ENCODE measurements at regions of chr11 and their contacts with region 1.

Region 1: DNA sequence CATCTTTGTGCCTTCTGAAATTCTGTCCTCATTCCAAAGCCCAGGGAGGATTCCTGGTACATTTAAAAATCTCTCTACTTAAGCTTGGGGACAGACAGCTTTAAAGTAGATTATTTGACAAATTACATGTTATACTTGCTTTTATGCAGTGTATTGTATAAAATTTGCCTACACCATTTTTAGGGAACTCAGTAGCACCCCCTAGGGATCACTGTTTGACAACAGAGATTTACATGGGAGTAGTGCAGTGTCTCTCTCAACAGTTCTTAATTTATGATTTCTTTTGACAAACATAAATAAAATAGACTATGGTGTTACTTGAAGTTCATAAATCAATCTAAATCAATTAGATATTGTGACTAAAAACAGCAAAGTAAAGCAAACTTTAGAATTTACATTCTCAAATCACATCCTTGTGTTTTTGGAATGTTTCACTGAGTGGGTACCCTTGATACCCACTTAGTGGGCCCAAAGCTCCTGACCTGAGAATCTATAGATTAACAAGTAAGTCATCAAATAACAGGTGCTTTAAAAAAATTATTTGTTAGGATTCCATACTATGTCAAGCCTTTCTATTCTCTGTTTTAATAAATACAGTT is 428.8 kb downstream of the DYNC2H1 start:
- DNase-seq: peak; percentile 54
- H3K4me3 ChIP-seq: no peak overlapping the region
- H3K27ac ChIP-seq: no peak overlapping the region
- H3K4me1 ChIP-seq: peaks cover 4% of the 10 kb centered on the region
- H3K27me3 ChIP-seq: no peaks in the 10 kb centered on the region
- CTCF ChIP-seq: peak; percentile 45 to 46
- POLR2A ChIP-seq: no peak

Region 2: GRCh38 chr11:102810945-102811660 is 726.9 kb before region 1 on chr11:
- CTCF ChIA-PET with region 1: no interaction called
- POLR2A ChIA-PET with region 1: no interaction called
- dilution Hi-C with region 1: no loop called
- intact Hi-C with region 1: loop called (anchors 10 kb)
- DNase-seq: peak; percentile 34
- H3K4me3 ChIP-seq: no peak overlapping the region
- H3K27ac ChIP-seq: no peak overlapping the region
- H3K4me1 ChIP-seq: no peaks in the 10 kb centered on the region
- H3K27me3 ChIP-seq: peaks cover 10 to 13% of the 10 kb centered on the region in 2 experiments
- CTCF ChIP-seq: peak; percentile 28 to 43
- POLR2A ChIP-seq: no peak

Region 3: GRCh38 chr11:103202048-103202651 is 335.9 kb before region 1 on chr11:
- CTCF ChIA-PET with region 1: interaction called, 5 read pairs
- POLR2A ChIA-PET with region 1: no interaction called
- dilution Hi-C with region 1: no loop called
- intact Hi-C with region 1: loop called (anchors 5 kb)
- DNase-seq: peak; percentile 56
- H3K4me3 ChIP-seq: no peak overlapping the region
- H3K27ac ChIP-seq: no peak overlapping the region
- H3K4me1 ChIP-seq: no peaks in the 10 kb centered on the region
- H3K27me3 ChIP-seq: no peaks in the 10 kb centered on the region
- CTCF ChIP-seq: peak; percentile 42 to 50
- POLR2A ChIP-seq: no peak

Region 4: DNA sequence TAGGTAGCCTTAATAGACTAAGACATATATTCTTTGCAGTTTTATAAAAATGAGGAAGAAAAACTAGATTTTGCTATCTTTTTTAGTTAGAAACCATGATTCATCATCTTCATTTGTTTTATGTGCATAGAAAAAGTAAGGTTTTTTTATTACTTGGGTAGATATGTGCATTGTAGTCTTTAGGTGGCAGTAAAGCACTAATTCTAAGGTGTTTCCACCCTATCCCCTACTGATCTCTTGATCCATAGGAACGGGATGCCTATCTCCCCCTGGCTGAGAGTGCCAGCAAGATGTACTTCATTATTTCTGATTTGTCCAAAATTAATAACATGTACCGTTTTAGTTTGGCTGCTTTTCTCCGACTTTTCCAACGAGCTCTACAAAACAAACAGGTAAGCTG is 280.6 kb before region 1 on chr11:
- CTCF ChIA-PET with region 1: interaction called, 6 read pairs
- POLR2A ChIA-PET with region 1: no interaction called
- dilution Hi-C with region 1: no loop called
- intact Hi-C with region 1: loop called (anchors 1 kb)
- DNase-seq: peak; percentile 60
- H3K4me3 ChIP-seq: no peak overlapping the region
- H3K27ac ChIP-seq: no peak overlapping the region
- H3K4me1 ChIP-seq: no peaks in the 10 kb centered on the region
- H3K27me3 ChIP-seq: no peaks in the 10 kb centered on the region
- CTCF ChIP-seq: peak in 1 of 2 donors; percentile 32
- POLR2A ChIP-seq: no peak

Region 5: DNA sequence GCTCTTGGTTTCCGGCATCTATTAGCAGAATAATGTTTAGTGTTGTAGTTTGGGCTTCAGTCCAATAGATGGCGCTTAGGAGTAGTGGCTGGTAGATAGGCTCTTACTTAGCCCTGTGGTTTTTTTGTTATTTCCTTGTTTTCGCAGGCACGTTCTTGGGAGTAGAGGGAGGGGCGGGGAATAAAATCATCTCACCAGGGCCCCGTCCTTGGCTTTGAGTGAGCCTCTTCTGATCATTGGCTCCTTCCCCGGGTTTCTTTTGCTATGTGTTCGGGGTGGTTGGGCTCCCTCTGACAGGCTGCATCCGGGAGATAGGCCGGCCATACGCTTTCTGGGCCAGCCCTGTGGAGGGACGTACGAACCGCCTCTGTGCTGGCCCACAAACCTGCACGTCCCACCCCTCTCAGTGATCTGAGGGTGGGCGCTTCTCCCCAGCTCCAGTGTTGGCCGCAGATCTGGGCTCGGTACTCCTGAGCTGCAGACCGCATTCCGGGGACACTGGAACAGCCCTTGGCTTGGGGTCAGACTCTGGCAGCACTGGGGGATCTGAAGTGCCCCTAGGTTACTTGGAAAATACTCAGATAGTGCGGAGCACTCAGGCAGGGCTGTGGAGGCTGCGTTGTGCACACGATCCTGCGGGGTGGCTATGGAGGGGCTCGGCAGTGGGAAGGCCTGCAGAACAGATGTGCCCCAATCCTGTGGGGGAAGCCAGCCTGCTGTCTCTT is 211.8 kb before region 1 on chr11:
- CTCF ChIA-PET with region 1: interaction called, 25 read pairs
- POLR2A ChIA-PET with region 1: no interaction called
- dilution Hi-C with region 1: no loop called
- intact Hi-C with region 1: loop called (anchors 1 kb)
- DNase-seq: peak; percentile 77
- H3K4me3 ChIP-seq: no peak overlapping the region
- H3K27ac ChIP-seq: no peak overlapping the region
- H3K4me1 ChIP-seq: peaks cover 8% of the 10 kb centered on the region
- H3K27me3 ChIP-seq: no peaks in the 10 kb centered on the region
- CTCF ChIP-seq: peak; percentile 67 to 74
- POLR2A ChIP-seq: no peak

Region 6: DNA sequence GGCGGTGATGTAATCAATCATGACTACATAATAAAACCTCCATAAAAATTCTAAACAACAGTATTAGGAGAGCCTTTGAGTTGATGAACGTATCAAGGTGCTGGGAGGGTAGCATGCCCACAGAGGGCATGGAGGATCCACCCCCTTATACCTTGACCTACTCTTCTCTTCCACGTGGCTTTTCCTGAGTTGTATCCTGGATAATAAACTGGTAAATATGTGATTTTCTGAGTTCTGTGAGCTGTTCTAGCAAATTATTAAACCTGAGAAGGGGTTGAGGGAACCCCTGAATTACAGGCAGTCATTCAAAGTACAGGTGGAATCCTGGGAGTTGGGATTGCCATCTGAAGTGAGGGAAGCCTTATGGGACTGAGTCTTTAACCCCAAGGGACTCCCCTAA is 18.2 kb after region 1 on chr11:
- CTCF ChIA-PET with region 1: interaction called, 48 read pairs
- POLR2A ChIA-PET with region 1: no interaction called
- dilution Hi-C with region 1: no loop called
- intact Hi-C with region 1: no loop called
- DNase-seq: no peak
- H3K4me3 ChIP-seq: no peak overlapping the region
- H3K27ac ChIP-seq: no peak overlapping the region
- H3K4me1 ChIP-seq: no peaks in the 10 kb centered on the region
- H3K27me3 ChIP-seq: no peaks in the 10 kb centered on the region
- CTCF ChIP-seq: no peak
- POLR2A ChIP-seq: no peak

Region 7: DNA sequence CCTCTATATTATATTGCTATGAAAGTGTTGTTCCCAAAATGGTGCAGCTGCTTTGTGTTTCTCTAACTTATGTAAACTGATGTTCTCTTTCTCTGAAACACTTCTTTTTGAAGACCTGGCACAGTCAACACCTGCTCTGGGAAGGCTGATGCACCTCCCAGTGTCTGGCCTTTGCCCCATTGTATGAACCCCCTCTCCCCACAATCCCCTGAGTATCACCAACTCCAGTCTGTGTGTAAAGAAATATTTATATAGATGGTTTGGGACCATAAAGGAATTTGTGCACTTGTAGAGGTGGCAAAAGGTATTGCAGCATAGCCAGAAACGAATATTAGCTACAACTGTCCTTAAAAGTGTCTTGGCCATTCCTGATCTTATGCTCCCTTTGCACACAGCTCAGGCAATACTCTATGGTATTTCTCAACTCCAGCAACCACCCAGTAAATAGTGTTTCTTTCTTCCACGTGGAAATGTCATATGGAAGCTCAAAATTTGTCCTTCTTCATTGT is 133.2 kb after region 1 on chr11:
- CTCF ChIA-PET with region 1: no interaction called
- POLR2A ChIA-PET with region 1: no interaction called
- dilution Hi-C with region 1: no loop called
- intact Hi-C with region 1: no loop called
- DNase-seq: no peak
- H3K4me3 ChIP-seq: no peak overlapping the region
- H3K27ac ChIP-seq: no peak overlapping the region
- H3K4me1 ChIP-seq: peaks cover 3% of the 10 kb centered on the region
- H3K27me3 ChIP-seq: no peaks in the 10 kb centered on the region
- CTCF ChIP-seq: no peak
- POLR2A ChIP-seq: no peak

Region 8: DNA sequence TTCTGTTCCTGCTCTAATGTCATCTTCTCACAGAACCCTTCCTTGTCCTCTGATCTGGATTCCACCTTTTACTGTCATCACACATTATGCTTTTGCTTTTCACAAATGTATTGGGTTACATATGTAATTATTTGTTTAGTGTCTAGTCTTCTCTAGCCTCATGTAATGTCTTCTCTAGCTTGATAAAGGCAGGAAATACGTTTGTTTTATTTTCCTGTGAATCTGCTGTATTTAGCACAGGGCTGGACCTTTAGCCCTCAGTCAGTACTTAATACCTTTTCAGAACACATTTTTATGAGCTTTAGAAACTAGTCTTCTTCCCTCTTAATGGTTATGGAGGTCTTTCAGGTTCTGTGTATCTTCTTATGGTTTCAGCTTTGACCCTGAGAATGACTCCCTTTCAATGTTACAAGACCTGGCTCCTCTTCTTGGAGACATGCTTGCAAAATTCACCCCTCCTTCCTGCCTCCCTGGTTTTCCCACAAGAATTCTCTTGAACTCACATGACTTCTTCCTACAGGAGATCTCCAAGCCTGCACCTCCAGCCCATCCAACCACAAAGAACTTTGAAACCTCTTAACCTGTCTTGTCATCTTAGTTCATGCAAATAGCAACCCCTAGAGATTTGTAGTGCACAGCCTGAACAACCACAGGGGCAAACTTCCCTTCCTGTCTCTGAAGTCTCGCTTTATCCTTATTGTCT is 365.8 kb after region 1 on chr11:
- CTCF ChIA-PET with region 1: no interaction called
- POLR2A ChIA-PET with region 1: no interaction called
- dilution Hi-C with region 1: no loop called
- intact Hi-C with region 1: loop called (anchors 10 kb)
- DNase-seq: no peak
- H3K4me3 ChIP-seq: no peak overlapping the region
- H3K27ac ChIP-seq: no peak overlapping the region
- H3K4me1 ChIP-seq: peaks cover 36% of the 10 kb centered on the region
- H3K27me3 ChIP-seq: no peaks in the 10 kb centered on the region
- CTCF ChIP-seq: no peak
- POLR2A ChIP-seq: no peak

Measured in endothelial cell of umbilical vein (primary cell).